AG04450 (cell line): ENCODE measurements at regions of chr9 and their contacts with region 1.

Region 1: DNA sequence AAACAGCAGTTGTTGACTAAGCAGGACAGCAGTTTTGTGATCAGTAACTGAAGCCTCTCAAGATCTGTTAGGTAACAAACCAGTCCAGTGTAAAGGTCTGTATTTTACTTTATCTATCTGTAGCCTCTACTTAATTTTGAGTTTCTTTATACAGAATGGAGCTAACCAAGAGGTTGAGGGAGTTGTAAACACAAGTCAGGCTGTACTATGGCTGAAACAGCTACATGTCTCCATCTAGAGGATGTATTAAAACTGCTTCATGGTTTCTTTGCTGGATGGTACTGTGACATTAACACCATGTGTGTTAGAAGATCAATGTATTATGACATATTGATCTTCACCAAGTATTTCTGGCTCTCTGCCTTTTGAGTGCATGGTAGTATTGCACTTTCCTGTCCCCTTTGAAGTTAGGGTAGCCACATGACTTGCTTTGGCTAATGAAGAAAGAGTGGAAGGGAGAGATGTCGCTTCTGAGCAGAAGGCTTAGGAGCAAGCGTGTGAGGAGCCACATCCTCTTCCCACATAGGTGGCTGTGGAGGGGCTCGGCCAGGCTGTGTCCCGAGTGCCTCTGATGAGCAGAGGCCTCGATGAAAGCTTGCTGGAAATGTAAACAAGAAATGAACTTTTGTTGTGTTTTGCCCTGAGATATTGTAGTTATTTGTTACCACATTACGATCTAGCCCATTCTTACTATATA is 105.6 kb upstream of the PCA3 start:
- DNase-seq: peak; percentile 43
- H3K4me3 ChIP-seq: no peak overlapping the region
- H3K27ac ChIP-seq: no peak overlapping the region
- H3K27me3 ChIP-seq: no peaks in the 10 kb centered on the region
- CTCF ChIP-seq: peak; percentile 79

Region 2: DNA sequence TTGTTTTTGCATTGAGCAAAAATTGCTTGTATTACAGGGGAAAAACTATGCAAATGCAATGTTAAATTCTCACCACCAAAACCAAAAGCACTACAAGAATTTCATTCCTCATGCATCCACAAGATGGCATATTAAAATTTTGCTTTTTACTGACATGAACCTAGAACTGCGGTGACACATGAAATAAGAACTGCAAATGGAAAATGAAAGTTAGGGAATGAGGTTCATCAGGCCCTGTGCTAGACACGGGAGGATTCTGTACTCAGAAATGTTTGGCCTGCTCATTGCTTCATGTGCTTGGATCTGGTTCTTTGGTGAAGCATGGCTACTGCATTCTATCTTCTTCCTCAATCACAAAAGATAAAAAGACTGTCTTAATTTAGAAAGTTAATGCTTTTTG is 255.3 kb before region 1 on chr9:
- CTCF ChIA-PET with region 1: interaction called, 27 read pairs
- POLR2A ChIA-PET with region 1: no interaction called
- DNase-seq: peak; percentile 56
- H3K4me3 ChIP-seq: no peak overlapping the region
- H3K27ac ChIP-seq: no peak overlapping the region
- H3K27me3 ChIP-seq: no peaks in the 10 kb centered on the region
- CTCF ChIP-seq: peak; percentile 70

Region 3: GRCh38 chr9:76443892-76444581 is 214.6 kb before region 1 on chr9:
- CTCF ChIA-PET with region 1: interaction called, 120 read pairs
- POLR2A ChIA-PET with region 1: no interaction called
- DNase-seq: no peak
- H3K4me3 ChIP-seq: no peak overlapping the region
- H3K27ac ChIP-seq: no peak overlapping the region
- H3K27me3 ChIP-seq: no peaks in the 10 kb centered on the region
- CTCF ChIP-seq: no peak

Region 4: GRCh38 chr9:76458903-76459690 is 199.6 kb before region 1 on chr9 and contains the start of gene GCNT1:
- CTCF ChIA-PET with region 1: interaction called, 11 read pairs
- POLR2A ChIA-PET with region 1: interaction called, 3 read pairs
- DNase-seq: no peak
- H3K4me3 ChIP-seq: peak within 1 kb of the TSS; percentile 86
- H3K27ac ChIP-seq: peak within 1 kb of the TSS; percentile 47
- H3K27me3 ChIP-seq: no peaks in the 10 kb centered on the region
- CTCF ChIP-seq: peak; percentile 29; the same call in 1 of the 2 replicates
- polyA plus RNA-seq, gene GCNT1: 6.9 and 7.6 TPM in 2 replicates

Region 5: DNA sequence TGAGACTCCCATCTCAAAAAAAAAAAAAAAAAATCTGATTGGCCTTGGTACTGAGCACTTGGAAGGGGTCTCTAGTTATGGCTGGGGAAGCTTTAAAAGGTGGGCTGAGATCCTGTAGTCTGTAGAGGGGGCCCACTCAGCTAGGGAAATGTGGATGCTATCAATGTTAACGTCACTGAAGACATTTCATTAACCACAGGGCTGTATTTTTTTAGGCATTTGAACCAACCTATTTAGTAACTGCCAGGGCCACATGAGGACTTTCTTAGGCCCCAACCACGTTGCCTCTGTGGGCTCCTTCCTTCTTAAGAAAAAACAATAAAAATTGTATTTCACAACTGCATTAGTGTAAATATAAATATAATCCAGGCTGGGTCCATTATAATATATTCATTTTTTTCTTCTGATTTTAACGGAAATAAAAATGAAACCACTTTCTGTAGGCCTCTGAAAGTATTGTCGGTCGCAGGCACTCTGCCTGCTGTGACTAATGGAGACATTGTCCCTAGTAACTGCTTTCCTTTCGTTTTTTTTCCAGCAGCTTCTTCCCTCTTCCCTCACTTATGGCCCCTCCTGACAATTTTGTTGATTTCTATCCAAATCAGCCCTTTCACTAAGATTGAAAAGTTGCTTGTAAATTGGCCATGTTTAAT is 128.1 kb before region 1 on chr9:
- CTCF ChIA-PET with region 1: no interaction called
- POLR2A ChIA-PET with region 1: no interaction called
- DNase-seq: no peak
- H3K4me3 ChIP-seq: no peak overlapping the region
- H3K27ac ChIP-seq: no peak overlapping the region
- H3K27me3 ChIP-seq: peaks cover 3% of the 10 kb centered on the region
- CTCF ChIP-seq: no peak

Region 6: DNA sequence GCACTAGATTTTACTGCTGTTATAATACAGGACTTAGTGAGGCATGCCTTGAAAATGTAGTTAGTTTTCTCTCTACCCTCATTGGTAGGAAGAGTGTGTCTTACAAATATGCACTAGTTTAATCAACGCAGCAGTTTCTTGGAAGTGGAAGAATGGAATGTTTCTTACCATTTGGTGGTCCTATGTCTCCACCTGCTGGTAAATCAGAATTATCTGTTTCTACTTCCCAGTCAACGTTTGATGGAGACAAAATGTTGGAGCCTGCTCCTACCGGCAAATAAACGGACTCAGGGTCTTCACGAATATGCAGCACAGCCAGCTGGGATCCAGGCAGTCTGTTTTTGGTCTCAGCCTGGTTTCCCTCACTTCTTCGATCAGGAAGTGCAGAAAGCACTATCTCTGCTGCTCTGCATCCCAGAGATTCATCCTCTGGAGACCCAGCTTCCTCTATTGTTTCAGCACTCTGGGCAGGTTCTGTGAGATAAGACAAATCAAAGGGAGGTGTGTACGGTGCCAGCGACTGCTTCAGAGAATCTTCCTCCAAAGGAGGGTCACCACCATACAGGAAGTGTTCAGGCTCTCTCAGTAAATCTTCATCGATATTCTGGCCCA is 46.0 kb after region 1 on chr9:
- CTCF ChIA-PET with region 1: interaction called, 18 read pairs
- POLR2A ChIA-PET with region 1: no interaction called
- DNase-seq: peak; percentile 82
- H3K4me3 ChIP-seq: no peak overlapping the region
- H3K27ac ChIP-seq: no peak overlapping the region
- H3K27me3 ChIP-seq: peaks cover 14% of the 10 kb centered on the region
- CTCF ChIP-seq: peak; percentile 68

Region 7: GRCh38 chr9:76732341-76732958 is 73.8 kb after region 1 on chr9:
- CTCF ChIA-PET with region 1: no interaction called
- POLR2A ChIA-PET with region 1: no interaction called
- DNase-seq: no peak
- H3K4me3 ChIP-seq: no peak overlapping the region
- H3K27ac ChIP-seq: no peak overlapping the region
- H3K27me3 ChIP-seq: peaks cover 2% of the 10 kb centered on the region
- CTCF ChIP-seq: no peak

Region 8: DNA sequence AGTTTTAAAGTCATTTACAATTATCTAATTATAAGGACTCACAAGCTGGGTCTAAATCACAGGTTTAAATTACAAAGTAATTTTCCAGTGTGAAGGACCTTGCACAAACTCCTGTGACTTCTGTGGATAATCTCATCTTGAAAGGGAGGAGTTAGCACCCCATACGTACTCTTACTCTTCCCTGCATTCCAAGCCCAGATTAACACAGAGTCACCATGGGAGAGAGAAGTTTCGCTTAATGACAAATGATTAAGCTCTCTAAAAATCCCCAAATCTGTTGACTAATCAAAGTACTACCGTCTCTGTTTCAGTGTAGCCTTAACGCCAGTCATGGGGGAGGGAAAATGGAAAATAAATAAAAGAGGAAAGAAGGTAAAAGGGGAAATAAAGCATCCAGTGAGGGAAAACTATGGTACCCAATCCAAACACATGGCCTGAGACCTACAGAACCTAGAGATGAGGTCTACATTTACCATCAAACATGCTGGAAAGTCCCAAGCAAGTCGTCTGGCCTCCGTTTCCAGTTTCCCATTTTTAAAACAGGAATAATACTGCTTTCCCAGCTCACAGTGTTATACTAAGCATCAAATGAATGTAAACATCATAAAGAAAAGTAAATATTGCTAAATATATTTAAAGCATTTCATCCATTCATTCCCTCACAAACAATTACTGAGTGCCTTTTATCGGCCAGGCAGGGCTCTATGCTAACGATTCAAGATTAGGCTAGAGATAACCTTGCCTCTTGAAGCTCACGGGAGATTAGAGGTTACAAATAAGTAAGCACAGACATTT is 168.8 kb after region 1 on chr9:
- CTCF ChIA-PET with region 1: no interaction called
- POLR2A ChIA-PET with region 1: no interaction called
- DNase-seq: no peak
- H3K4me3 ChIP-seq: no peak overlapping the region
- H3K27ac ChIP-seq: no peak overlapping the region
- H3K27me3 ChIP-seq: no peaks in the 10 kb centered on the region
- CTCF ChIP-seq: no peak